ENCODE measurements at regions of chr4 and their contacts with region 1.

Region 1: GRCh38 chr4:106266201-106266600 is 49.8 kb downstream of the TBCK start:
- DNase-seq: peak; percentile 72
- H3K4me3 ChIP-seq: no peak overlapping the region
- H3K27ac ChIP-seq: no peak overlapping the region
- H3K4me1 ChIP-seq: peaks cover 6% of the 10 kb centered on the region
- H3K27me3 ChIP-seq: no peaks in the 10 kb centered on the region
- CTCF ChIP-seq: peak; percentile 36 to 40
- POLR2A ChIP-seq: no peak

Region 2: DNA sequence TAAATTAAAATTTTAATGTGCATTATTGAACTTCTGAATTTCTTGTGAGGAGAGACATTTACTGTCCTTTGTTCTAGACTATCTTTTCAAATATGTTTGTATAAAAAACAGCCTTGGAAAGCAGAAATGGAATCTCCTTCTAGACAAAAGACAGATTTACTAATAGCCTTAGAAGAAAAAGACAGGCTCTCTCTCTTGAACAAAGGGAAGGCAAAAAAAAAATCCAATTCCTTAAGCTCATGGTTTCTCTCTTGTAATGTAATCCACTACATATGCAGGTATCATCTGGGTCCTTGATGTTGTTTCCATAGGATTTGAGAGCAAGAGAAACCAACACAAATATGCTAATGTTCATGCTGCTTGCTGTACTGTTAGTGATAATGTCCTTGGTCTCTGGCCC is 56.2 kb before region 1 on chr4:
- CTCF ChIA-PET with region 1: no interaction called
- POLR2A ChIA-PET with region 1: no interaction called
- dilution Hi-C with region 1: no loop called
- intact Hi-C with region 1: no loop called
- DNase-seq: no peak
- H3K4me3 ChIP-seq: no peak overlapping the region
- H3K27ac ChIP-seq: no peak overlapping the region
- H3K4me1 ChIP-seq: peaks cover 6% of the 10 kb centered on the region
- H3K27me3 ChIP-seq: no peaks in the 10 kb centered on the region
- CTCF ChIP-seq: no peak
- POLR2A ChIP-seq: no peak

Region 3: GRCh38 chr4:106329041-106329618 is 62.9 kb after region 1 on chr4:
- CTCF ChIA-PET with region 1: interaction called, 47 read pairs
- POLR2A ChIA-PET with region 1: no interaction called
- dilution Hi-C with region 1: no loop called
- intact Hi-C with region 1: loop called (anchors 2 kb)
- DNase-seq: peak; percentile 69
- H3K4me3 ChIP-seq: no peak overlapping the region
- H3K27ac ChIP-seq: no peak overlapping the region
- H3K4me1 ChIP-seq: peaks cover 9% of the 10 kb centered on the region
- H3K27me3 ChIP-seq: no peaks in the 10 kb centered on the region
- CTCF ChIP-seq: peak; percentile 39 to 64
- POLR2A ChIP-seq: no peak

Region 4: GRCh38 chr4:106583567-106583966 is 317.4 kb after region 1 on chr4:
- CTCF ChIA-PET with region 1: no interaction called
- POLR2A ChIA-PET with region 1: no interaction called
- dilution Hi-C with region 1: no loop called
- intact Hi-C with region 1: loop called (anchors 2 kb)
- DNase-seq: peak; percentile 91
- H3K4me3 ChIP-seq: no peak overlapping the region
- H3K27ac ChIP-seq: peak overlapping the region; percentile 96
- H3K4me1 ChIP-seq: peaks cover 56% of the 10 kb centered on the region
- H3K27me3 ChIP-seq: no peaks in the 10 kb centered on the region
- CTCF ChIP-seq: no peak
- POLR2A ChIP-seq: no peak

Region 5: DNA sequence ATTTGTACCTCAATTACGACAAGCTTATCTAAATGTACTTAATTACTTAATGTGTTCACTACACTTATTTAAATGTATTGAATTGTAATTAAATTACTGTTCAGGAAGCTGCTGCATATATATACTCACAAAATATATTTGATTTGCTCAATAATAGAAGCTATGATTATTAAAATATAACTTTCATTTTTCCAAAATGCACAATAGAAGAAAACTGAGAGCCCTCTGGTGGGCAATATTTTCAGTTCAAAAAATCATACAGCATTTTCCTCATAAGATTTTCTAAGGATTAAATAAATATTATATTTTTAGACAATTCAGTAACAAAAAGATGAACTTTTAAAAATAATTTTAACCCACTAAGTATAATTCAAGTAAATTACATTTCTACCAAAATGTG is 552.6 kb after region 1 on chr4:
- CTCF ChIA-PET with region 1: interaction called, 27 read pairs
- POLR2A ChIA-PET with region 1: no interaction called
- dilution Hi-C with region 1: no loop called
- intact Hi-C with region 1: no loop called
- DNase-seq: no peak
- H3K4me3 ChIP-seq: no peak overlapping the region
- H3K27ac ChIP-seq: no peak overlapping the region
- H3K4me1 ChIP-seq: no peaks in the 10 kb centered on the region
- H3K27me3 ChIP-seq: no peaks in the 10 kb centered on the region
- CTCF ChIP-seq: no peak
- POLR2A ChIP-seq: no peak

Region 6: GRCh38 chr4:107037199-107037584 is 771.0 kb after region 1 on chr4:
- CTCF ChIA-PET with region 1: interaction called, 9 read pairs
- POLR2A ChIA-PET with region 1: no interaction called
- dilution Hi-C with region 1: no loop called
- intact Hi-C with region 1: loop called (anchors 10 kb)
- DNase-seq: peak; percentile 43
- H3K4me3 ChIP-seq: peak overlapping the region in 1 of 3 experiments; percentile 84
- H3K27ac ChIP-seq: no peak overlapping the region
- H3K4me1 ChIP-seq: peaks cover 34% of the 10 kb centered on the region
- H3K27me3 ChIP-seq: peaks cover 17 to 19% of the 10 kb centered on the region in 2 experiments
- CTCF ChIP-seq: peak; percentile 65 to 77
- POLR2A ChIP-seq: no peak

Measured in endothelial cell of umbilical vein (primary cell).